Transverse colon (tissue), 4 donors: ENCODE measurements at regions of chrX and their contacts with region 1.

Region 1: DNA sequence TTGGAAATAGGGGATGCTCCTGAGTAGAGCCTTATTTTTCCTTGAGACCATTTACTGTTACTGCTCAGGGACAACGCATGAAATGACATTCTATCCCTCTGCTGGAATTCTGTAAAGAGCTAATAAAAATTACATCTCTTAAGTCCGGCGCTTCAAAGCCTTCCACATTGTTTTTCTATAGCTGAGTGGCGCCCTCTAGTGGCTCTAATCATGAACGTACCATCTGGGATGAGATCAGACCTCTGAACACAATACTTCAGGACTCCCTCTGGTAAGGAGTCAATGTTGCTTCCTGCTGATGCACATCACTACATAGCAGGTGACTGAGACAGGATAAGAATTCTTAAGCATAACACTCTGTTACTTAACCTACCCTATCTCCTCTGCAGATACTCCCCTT is 6.0 kb downstream of the HMGN5 start:
- DNase-seq: peak; percentile 57
- H3K4me3 ChIP-seq: no peak overlapping the region
- H3K27ac ChIP-seq: no peak overlapping the region
- H3K4me1 ChIP-seq: no peaks in the 10 kb centered on the region
- H3K27me3 ChIP-seq: no peaks in the 10 kb centered on the region
- CTCF ChIP-seq: peak in 4 of 5 experiments; percentile 36 to 61 (median 54)
- EP300 ChIP-seq: no peak
- POLR2A ChIP-seq: no peak

Region 2: GRCh38 chrX:81286646-81287045 is 90.9 kb after region 1 on chrX:
- in situ Hi-C with region 1: no loop called
- intact Hi-C with region 1: no loop called
- DNase-seq: no peak
- H3K4me3 ChIP-seq: no peak overlapping the region
- H3K27ac ChIP-seq: no peak overlapping the region
- H3K4me1 ChIP-seq: no peaks in the 10 kb centered on the region
- H3K27me3 ChIP-seq: no peaks in the 10 kb centered on the region
- CTCF ChIP-seq: no peak
- EP300 ChIP-seq: no peak
- POLR2A ChIP-seq: no peak

Region 3: DNA sequence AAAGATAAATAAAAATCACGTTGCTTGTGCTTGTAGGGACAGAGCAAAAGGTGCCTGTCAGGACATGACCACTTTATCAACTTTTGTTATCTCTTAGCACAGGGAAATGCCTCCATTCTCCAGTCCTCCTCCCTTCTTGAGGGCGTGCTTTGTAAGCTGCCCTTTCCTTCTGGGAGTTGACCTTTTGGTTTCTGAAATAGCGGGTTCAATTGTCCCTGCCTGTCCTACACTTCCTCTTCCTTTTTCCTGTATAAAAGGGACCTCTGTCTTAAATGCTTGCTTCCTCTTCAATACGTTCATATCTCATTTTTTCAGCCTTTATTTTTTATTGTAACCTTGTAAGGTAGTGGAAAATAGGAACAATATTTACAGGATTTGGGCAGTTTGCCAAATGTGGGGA is 159.7 kb after region 1 on chrX:
- in situ Hi-C with region 1: loop called in 1 of 4 experiments (anchors 25 kb)
- intact Hi-C with region 1: no loop called
- DNase-seq: no peak
- H3K4me3 ChIP-seq: no peak overlapping the region
- H3K27ac ChIP-seq: no peak overlapping the region
- H3K4me1 ChIP-seq: no peaks in the 10 kb centered on the region
- H3K27me3 ChIP-seq: no peaks in the 10 kb centered on the region
- CTCF ChIP-seq: no peak
- EP300 ChIP-seq: no peak
- POLR2A ChIP-seq: no peak

Region 4: DNA sequence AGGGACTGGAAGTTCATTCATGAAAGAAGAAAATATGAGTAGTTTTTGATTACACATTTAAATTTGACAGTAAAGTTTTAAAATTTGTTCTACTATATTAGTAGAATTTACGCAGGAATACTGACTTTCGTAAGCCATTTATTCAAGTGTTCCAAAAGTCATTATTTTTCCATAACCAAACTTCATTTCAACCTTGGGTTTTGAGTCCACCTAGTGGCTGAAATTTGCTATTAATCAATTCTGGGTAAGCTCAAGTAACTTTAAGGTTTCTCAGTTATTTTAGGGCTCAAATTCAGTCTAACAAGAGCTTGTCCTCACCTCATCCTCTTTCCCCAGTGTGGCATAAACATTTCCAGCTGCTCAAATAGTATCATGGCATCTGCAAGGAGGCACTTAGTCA is 181.6 kb after region 1 on chrX:
- in situ Hi-C with region 1: loop called in 3 of 4 experiments (anchors 25 kb)
- intact Hi-C with region 1: no loop called
- DNase-seq: no peak
- H3K4me3 ChIP-seq: no peak overlapping the region
- H3K27ac ChIP-seq: no peak overlapping the region
- H3K4me1 ChIP-seq: no peaks in the 10 kb centered on the region
- H3K27me3 ChIP-seq: no peaks in the 10 kb centered on the region
- CTCF ChIP-seq: peak; percentile 35 to 55 (median 42)
- EP300 ChIP-seq: no peak
- POLR2A ChIP-seq: no peak